Dendritic cell treated with granulocyte-macrophage colony-stimulating factor and Interleukin-4, amounts not matched to agents 40 ng/mL and 50 ng/mL, for 4 days (primary cell): ENCODE measurements at regions of chr16 and their contacts with region 1.

Region 1: DNA sequence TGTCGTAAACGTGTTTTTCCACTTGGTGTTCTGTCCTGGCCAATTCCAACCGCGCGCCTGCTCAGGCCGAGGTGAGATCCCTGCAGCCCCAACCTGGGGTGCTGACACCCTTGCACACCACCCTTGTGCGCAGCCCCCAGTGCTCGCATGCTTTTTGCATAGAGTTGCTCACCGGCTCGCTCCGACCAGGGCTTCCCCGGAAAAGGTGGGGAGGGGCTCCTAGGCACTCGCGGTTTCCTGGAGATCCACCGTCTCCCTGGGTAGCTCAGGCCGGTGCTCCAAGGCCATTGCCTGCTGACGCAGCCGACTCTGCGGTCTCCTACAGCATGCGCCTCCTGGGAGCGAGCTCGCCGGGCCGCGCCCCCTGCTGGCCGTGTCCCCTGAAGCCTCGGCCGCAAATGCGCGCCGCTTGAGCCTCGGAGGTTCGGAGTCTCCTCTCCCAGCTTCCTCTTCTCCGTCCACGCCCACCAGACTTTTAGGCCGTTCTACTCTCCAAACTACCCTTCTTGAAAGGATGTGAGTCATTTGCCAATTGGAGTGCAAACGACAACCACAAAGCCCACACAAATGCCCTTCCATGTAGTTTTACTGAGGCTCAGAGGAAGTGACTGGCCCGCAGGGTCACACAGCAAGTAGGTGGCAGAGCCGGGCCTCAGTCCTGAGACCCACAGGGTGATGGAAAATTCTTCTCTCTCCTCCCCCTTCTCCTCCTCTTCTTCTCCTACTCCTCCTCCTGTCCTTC is 7.2 kb upstream of the PDP2 start:
- H3K4me3 Mint-ChIP-seq: peak overlapping the region; percentile 71
- H3K27ac Mint-ChIP-seq: peak overlapping the region; percentile 81
- H3K4me1 Mint-ChIP-seq: peaks cover 45% of the 10 kb centered on the region
- H3K27me3 Mint-ChIP-seq: peaks cover 37% of the 10 kb centered on the region

Region 2: GRCh38 chr16:66728117-66728787 is 144.9 kb before region 1 on chr16:
- intact Hi-C with region 1: loop called (anchors 5 kb)
- H3K4me3 Mint-ChIP-seq: no peak overlapping the region
- H3K27ac Mint-ChIP-seq: peak overlapping the region; percentile 9
- H3K4me1 Mint-ChIP-seq: peaks cover 12% of the 10 kb centered on the region
- H3K27me3 Mint-ChIP-seq: no peaks in the 10 kb centered on the region

Region 3: DNA sequence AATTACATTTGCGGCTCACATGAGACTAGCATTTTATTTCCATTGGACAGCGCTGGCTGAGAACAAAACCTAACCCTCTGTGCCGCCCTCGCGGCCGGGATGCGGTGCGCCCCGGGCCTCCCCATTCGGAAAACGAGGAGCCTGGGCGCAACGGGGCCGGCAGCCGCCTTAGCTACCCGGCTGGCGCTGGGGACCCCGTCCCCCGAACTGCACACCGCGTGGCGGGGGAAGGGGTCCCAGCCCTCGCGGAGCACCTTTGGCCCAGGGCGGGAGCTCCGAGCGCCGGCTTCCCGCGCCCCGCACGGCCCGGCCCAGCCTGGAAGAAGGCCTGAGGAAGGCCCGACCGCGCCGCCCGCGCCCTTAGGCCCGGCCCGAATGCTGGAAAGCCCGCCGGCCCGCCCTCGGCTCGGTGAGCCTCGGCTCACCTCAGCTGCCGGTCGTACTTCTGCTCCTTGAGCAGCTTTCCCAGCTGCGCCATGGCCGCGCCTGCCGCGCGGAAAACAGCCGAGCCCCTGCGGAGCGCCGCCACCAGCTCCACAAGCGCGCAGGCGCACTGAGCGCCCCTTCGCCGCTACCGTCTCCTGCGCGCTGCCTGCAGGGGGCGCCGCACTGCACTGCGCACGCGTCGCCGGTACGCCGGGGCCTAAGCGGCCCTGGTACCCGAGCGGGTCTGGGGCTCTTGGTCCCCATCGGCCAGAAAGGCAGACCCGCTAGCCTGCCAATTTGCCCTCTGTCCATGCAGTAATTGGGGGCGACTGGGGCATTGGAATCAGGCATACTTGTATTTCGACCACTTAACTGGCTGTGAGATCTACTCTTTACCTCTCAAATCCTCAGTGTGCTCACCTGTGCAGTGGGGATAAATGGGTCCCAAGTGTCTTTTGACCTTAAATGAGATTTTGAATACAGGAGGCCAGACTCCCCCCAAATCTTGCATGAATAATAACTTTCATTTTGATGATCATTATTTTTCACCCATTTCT is 42.4 kb before region 1 on chr16 and contains the start of gene NAE1:
- intact Hi-C with region 1: loop called (anchors 2 kb)
- H3K4me3 Mint-ChIP-seq: peak within 1 kb of the TSS; percentile 70
- H3K27ac Mint-ChIP-seq: peak within 1 kb of the TSS; percentile 71
- H3K4me1 Mint-ChIP-seq: peaks cover 8% of the 10 kb centered on the region
- H3K27me3 Mint-ChIP-seq: peaks cover 20% of the 10 kb centered on the region

Region 4: GRCh38 chr16:67249178-67250044 is 376.3 kb after region 1 on chr16:
- intact Hi-C with region 1: no loop called
- H3K4me3 Mint-ChIP-seq: peak overlapping the region; percentile 59
- H3K27ac Mint-ChIP-seq: no peak overlapping the region
- H3K4me1 Mint-ChIP-seq: peaks cover 42% of the 10 kb centered on the region
- H3K27me3 Mint-ChIP-seq: peaks cover 38% of the 10 kb centered on the region